ENCODE measurements at regions of chr12 and their contacts with region 1.

Region 1: GRCh38 chr12:59595883-59596540 is at the start of gene SLC16A7:
- DNase-seq: peak; percentile 93
- ATAC-seq: peak; percentile 85 to 91
- total RNA-seq, gene SLC16A7: 85.0 to 121 TPM

Region 2: GRCh38 chr12:59665701-59666100 is 69.7 kb after region 1 on chr12:
- intact Hi-C with region 1: loop called in 1 of 2 experiments (anchors 5 kb)
- DNase-seq: no peak
- ATAC-seq: no peak

Measured in left cardiac atrium (tissue), 4 donors.